ENCODE measurements at regions of chr3 and their contacts with region 1.

Region 1: GRCh38 chr3:157104928-157105652 is 54.9 kb downstream of the CCNL1 start:
- DNase-seq: no peak
- H3K4me3 ChIP-seq: no peak overlapping the region
- CTCF ChIP-seq: no peak

Region 2: DNA sequence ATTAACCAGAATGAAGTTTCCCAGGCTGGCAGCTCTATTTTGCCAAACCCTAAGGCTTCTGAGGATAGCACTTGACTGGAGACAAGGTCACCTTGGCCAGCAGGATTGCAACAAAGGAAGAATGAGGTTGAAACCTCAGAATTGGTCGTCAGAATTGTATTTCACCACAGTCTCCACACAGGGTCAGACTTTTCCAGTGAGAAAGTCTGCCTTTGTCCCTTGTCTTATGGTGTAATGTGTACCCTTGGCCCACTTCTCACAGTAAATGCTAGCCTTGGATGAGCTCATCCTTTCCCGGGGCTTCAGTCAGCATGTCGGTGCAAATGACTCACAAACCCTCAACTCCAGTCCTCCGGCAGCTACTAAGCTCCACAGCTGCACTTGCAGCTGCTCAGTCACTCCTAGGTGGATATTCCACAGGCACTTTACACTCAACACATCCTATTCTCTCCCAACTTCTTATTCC is 569.9 kb before region 1 on chr3:
- in situ Hi-C with region 1: loop called (anchors 25 kb)
- DNase-seq: peak; percentile 100
- H3K4me3 ChIP-seq: no peak overlapping the region
- CTCF ChIP-seq: peak; percentile 41

Region 3: DNA sequence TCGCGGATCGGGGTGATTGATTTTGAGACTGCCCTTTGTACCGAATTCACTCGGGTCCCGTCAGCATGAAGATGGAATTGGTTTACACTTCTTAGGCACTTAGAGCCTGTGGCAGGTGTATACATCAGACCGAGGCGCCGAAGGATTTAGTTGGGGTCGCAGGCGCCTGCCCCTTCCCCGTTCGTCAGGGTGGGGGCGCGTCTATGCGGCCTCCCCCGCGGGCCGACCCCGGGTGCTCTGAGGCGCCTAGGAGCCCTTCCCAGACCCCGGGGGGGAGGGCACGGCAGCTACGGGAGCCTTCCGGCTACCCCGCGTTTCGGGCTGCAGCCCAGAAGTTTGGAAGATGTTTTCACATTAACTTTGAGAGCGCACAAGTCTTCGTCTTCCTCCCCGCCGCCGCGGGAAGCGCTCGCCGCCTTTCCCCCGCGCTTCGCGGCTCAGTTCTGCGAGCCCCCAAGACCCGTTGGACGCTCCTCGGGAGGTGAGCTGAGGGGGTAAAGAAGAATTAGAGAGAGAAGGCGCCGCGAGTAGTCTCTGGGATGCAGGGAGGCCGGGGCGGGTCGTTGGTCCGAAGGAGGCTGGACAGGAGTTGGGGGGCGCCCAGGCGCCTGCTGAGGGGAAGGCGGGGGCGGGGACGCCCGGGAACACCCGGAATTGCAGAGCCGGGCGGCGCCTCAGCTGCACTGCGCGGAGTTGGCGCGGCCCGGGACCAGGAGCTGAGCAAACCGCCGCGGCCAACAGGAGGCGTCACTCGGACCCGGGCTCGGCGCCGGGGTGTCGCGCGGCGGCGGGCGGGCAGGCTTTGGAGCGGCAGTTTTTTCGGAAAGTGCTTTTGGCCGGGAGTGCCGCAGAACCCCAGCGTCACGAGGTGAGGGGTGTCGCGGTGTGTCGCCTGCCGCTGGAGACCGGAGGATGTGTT is 429.9 kb before region 1 on chr3:
- in situ Hi-C with region 1: loop called (anchors 25 kb)
- DNase-seq: no peak
- H3K4me3 ChIP-seq: peak overlapping the region; percentile 92
- CTCF ChIP-seq: peak; percentile 40

Region 4: DNA sequence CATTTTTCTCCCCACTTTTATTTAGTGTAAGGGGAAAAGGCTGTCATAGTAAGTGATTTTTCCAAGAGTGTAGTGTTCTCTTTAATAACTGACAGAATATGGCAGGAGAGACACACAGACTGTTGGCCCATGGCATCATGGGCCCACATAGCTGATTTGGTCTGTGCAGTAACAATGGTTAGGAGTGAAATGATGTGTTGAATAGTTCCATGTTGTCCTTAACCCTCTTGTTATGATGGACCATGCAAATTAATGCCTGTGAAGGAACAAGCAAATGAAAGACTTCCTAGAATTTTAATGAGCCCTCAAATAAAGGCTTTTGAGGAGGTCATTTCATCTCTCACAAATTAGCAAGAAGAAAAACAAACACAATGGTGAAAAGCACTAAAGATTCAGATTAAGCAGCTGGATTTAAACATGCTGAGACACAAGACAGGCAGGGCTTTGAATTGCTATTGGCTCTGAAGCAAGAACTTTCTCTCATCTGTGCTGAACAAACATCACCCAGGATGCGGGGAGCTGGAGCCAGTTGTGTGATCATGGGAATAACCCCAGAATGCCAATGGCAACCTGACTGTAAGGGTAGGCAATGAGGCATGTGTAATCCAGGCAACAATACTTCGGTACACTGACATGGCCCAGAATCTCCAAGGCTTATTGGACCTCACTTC is 534.8 kb after region 1 on chr3:
- in situ Hi-C with region 1: no loop called
- DNase-seq: no peak
- H3K4me3 ChIP-seq: no peak overlapping the region
- CTCF ChIP-seq: no peak